MCF 10A (cell line): ENCODE measurements at regions of chr3 and their contacts with region 1.

Region 1: DNA sequence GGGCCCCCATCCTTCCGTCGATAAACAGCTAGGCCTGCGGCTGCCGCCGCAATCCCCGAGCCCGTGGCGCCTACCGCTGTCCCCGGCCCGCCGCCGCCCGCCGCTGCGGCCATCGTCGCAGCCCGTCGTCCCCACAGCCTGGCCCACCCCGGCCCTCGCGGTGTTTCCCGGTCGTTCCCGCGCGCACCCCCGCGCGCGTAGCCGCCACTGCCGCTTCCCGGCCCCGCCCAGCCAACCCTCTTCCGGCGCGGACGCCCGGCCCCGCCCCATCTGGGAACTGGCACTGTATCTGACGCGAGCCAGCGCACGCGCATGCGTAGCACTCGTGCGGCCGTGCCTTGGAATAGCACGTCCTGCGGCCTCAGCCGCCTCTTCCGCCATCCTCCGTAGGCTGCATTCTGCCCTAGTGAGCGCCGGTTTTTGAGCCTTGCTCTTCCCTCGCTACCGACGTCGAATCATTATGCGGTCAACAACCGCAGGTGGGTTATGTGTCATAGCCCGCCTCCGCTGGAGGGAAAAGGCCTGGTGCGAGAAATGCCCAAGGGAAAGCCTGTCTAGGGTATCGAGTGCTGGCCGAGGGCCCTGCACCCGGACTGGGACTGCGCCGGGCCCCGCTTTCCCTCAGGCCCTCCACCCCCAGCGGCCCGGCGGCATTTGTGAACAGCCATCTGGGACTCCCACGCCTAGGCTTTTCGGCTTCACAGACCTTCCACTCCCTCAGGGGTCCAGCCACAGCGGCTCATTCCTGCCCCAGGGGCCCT is at the start of gene SMARCC1:
- DNase-seq: peak; percentile 97
- H3K4me3 Mint-ChIP-seq: peak within 1 kb of the TSS; percentile 94
- H3K27ac Mint-ChIP-seq: peak within 1 kb of the TSS; percentile 96
- H3K4me1 Mint-ChIP-seq: peaks cover 5% of the 10 kb centered on the region
- H3K27me3 Mint-ChIP-seq: no peaks in the 10 kb centered on the region
- CTCF ChIP-seq: no peak
- total RNA-seq, gene SMARCC1: 59.1 and 77.5 TPM in 2 replicates

Region 2: DNA sequence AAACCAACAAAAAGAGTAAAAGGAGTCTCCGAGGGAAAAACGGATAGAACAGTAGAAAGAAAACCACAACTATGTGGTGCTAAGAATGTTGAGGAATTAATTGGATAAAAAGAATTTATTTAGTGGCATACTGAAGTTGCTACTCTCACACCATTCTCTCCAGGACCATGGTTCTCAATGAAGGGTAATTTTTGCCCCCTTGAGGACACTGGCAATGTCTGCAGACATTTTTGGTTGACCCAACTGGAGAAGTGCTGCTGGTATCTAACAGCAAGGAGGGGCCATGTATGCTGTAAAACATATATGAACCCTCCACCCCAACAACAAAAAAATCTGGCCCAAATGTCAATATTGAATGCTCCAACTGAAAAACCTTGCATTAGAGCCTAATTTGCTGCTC is 117.3 kb before region 1 on chr3:
- CTCF ChIA-PET with region 1: interaction called, 3 read pairs
- POLR2A ChIA-PET with region 1: interaction called, 3 read pairs
- intact Hi-C with region 1: loop called (anchors 10 kb)
- DNase-seq: peak; percentile 35
- H3K4me3 Mint-ChIP-seq: no peak overlapping the region
- H3K27ac Mint-ChIP-seq: no peak overlapping the region
- H3K4me1 Mint-ChIP-seq: peaks cover 17% of the 10 kb centered on the region
- H3K27me3 Mint-ChIP-seq: no peaks in the 10 kb centered on the region
- CTCF ChIP-seq: peak; percentile 17

Region 3: DNA sequence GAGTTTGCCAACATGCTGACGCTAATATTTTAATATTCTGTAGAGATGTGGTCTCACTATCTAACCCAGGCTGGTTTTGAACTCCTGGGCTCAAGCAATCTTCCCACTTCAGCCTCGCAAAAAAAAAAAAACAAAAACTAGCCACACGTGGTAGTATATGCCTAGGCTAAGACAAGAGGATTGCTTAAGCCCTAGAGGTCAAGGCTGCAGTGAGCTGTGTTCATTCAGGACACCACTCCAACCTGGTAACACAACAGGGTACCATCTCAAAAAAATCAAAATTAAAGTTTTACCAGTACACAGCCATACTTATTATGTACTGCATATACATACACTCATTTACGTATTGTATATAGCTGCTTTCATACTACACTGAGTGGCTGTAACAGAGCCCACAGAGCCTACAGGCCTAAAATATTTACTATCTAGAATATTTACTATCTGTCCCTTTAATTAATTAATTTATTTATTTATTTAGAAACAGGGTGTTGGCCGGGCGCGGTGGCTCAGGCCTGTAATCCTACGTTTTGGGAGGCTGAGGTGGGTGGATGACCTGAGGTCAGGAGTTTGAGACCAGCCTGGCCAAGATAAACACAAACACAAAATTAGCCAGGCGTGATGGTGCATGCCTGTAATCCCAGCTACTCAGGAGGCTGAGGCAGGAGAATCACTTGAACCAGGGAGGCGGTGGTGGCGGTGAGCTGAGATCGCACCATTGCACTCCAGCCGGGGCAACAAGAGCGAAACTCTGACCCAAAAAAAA is 23.4 kb before region 1 on chr3:
- CTCF ChIA-PET with region 1: interaction called, 4 read pairs
- POLR2A ChIA-PET with region 1: interaction called, 11 read pairs
- intact Hi-C with region 1: no loop called
- DNase-seq: peak; percentile 15
- H3K4me3 Mint-ChIP-seq: no peak overlapping the region
- H3K27ac Mint-ChIP-seq: no peak overlapping the region
- H3K4me1 Mint-ChIP-seq: peaks cover 10% of the 10 kb centered on the region
- H3K27me3 Mint-ChIP-seq: no peaks in the 10 kb centered on the region
- CTCF ChIP-seq: no peak

Region 4: DNA sequence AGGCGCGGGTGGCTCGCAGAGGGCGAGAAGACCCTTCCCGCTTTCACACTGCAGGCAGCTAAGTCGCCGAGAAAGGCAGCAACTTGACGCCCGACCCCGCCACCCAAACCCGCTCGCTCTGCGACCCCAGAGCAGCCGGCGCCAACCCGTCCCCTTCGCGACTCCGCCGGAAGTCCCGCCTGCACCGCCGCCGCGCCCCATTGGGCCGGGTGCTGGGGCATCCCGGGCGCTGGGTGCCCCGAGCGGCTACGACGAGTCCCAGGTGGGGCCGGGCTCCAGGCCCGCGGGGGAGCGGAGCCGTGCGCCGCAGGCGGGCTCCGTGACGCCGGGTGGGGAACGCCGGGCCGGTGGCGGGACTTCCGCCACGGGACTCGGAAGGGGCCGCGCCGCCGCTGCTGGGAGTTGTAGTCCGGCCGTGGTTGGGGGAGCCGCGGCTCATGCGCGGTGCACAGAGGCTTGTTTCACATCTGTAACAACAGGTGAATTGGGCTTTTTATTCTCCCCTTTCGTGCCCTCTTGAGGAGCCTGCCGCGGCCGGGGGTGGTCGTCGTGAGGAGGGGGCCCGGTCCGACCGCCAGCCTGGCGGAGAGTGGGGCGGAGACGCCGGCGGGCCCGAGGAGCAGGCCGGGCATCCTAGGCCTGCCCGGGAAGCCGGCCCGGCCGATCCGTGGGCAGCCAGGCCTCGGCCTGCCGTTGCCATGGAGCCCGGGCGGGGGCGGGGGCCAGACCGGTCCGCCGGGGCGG is 21.0 kb after region 1 on chr3 and contains the start of gene DHX30:
- CTCF ChIA-PET with region 1: no interaction called
- POLR2A ChIA-PET with region 1: interaction called, 22 read pairs
- intact Hi-C with region 1: no loop called
- DNase-seq: peak; percentile 80
- H3K4me3 Mint-ChIP-seq: peak within 1 kb of the TSS; percentile 94
- H3K27ac Mint-ChIP-seq: peak within 1 kb of the TSS; percentile 97
- H3K4me1 Mint-ChIP-seq: peaks cover 12% of the 10 kb centered on the region
- H3K27me3 Mint-ChIP-seq: no peaks in the 10 kb centered on the region
- CTCF ChIP-seq: no peak
- total RNA-seq, gene DHX30: 80.5 and 86.2 TPM in 2 replicates

Region 5: GRCh38 chr3:47865192-47865591 is 83.3 kb after region 1 on chr3:
- CTCF ChIA-PET with region 1: no interaction called
- POLR2A ChIA-PET with region 1: no interaction called
- intact Hi-C with region 1: no loop called
- DNase-seq: no peak
- H3K4me3 Mint-ChIP-seq: no peak overlapping the region
- H3K27ac Mint-ChIP-seq: no peak overlapping the region
- H3K4me1 Mint-ChIP-seq: no peaks in the 10 kb centered on the region
- H3K27me3 Mint-ChIP-seq: no peaks in the 10 kb centered on the region
- CTCF ChIP-seq: no peak

Region 6: DNA sequence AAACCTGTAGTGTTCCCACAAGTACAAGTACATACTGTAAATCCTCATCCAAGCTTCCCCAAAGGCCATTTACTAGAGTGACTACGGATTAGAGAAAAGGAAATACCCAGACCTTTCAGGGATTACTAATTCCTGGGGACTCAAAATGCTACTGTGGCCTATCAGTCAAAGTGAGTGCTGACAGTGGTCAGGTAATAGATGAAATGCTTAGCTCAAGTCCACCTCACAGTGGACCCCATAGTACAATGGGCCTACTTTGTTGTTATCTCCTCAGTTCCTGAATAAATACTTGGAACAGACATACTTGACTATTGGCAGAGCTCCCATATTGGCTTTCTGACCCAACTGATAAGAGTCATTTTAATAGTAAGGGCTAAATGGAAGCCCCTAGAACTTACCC is 172.7 kb after region 1 on chr3:
- CTCF ChIA-PET with region 1: no interaction called
- POLR2A ChIA-PET with region 1: no interaction called
- intact Hi-C with region 1: no loop called
- DNase-seq: no peak
- H3K4me3 Mint-ChIP-seq: no peak overlapping the region
- H3K27ac Mint-ChIP-seq: no peak overlapping the region
- H3K4me1 Mint-ChIP-seq: no peaks in the 10 kb centered on the region
- H3K27me3 Mint-ChIP-seq: no peaks in the 10 kb centered on the region
- CTCF ChIP-seq: no peak